Naive thymus-derived CD4-positive, alpha-beta T cell (primary cell): ENCODE measurements at regions of chr9 and their contacts with region 1.

Region 1: DNA sequence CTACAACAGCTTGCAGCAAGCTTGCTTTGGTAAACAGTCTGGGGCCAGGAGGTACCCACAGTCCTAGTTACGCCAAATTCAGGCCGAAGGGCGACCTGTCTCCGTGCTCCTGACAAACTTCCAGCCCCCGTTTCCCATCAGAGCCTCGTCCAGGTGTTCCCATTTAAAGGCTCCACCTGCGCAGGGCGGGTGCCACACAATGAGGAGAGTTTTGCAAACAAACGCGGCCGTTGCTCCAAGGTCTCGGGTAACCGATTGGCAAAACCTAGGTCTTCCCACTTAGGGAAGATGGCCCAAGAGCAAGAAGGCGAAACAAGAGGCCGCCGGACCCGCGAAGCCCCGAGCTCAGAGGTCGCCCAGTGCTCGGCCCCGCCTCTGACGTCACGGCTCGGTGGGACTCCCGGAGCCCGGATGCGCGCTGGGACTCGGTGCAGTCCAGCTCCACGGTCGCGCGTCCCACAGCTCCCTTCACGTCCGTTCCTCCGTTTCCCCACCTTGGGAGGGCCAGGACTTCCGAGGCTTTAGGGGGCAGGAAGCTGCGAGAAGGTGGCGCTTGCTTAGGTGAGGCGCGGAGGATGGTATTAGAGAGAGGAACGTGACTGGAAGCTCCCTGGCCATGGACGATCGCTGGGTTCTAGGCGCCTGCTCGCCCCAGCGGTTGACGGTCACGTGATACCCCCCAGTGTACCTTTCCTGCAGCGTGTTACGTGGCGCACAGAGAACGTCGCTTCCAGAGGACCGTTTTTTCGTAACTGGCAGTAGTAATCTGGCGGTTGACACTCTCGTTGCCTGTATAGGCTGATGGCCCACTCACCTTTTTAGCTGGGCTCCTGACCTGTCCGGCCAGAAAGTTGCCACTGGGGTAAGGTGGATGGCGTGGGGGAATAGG is 41.8 kb upstream of the KDM4C start:
- DNase-seq: peak; percentile 44 to 71 (median 58)
- ATAC-seq: peak; percentile 89
- H3K4me3 ChIP-seq: peak overlapping the region; percentile 77
- H3K4me3 Mint-ChIP-seq: peak overlapping the region; percentile 76 to 92 (median 89)
- H3K27ac ChIP-seq: peak overlapping the region; percentile 66
- H3K27ac Mint-ChIP-seq: peak overlapping the region; percentile 84 to 94 (median 90)
- H3K4me1 ChIP-seq: peaks cover 7% of the 10 kb centered on the region in 2 donors
- H3K4me1 Mint-ChIP-seq: peaks cover 0 to 10% (median 7%) of the 10 kb centered on the region in 7 donors
- H3K27me3 ChIP-seq: no peaks in the 10 kb centered on the region
- H3K27me3 Mint-ChIP-seq: no peaks in the 10 kb centered on the region

Region 2: GRCh38 chr9:6703898-6704639 is 11.9 kb before region 1 on chr9:
- CTCF ChIA-PET with region 1: interaction called, 3 read pairs
- POLR2A ChIA-PET with region 1: interaction called, 16 read pairs
- intact Hi-C with region 1: loop called (anchors 1 kb)
- DNase-seq: peak; percentile 70 to 86 (median 77)
- ATAC-seq: peak; percentile 90
- H3K4me3 ChIP-seq: peak overlapping the region; percentile 98
- H3K4me3 Mint-ChIP-seq: peak overlapping the region; percentile 82 to 98 (median 95)
- H3K27ac ChIP-seq: peak overlapping the region; percentile 97
- H3K27ac Mint-ChIP-seq: peak overlapping the region; percentile 91 to 98 (median 93)
- H3K4me1 ChIP-seq: no peaks in the 10 kb centered on the region
- H3K4me1 Mint-ChIP-seq: peaks cover 3 to 15% (median 6%) of the 10 kb centered on the region in 7 donors
- H3K27me3 ChIP-seq: no peaks in the 10 kb centered on the region
- H3K27me3 Mint-ChIP-seq: peaks cover 0 to 3% (median 0%) of the 10 kb centered on the region in 5 donors

Region 3: DNA sequence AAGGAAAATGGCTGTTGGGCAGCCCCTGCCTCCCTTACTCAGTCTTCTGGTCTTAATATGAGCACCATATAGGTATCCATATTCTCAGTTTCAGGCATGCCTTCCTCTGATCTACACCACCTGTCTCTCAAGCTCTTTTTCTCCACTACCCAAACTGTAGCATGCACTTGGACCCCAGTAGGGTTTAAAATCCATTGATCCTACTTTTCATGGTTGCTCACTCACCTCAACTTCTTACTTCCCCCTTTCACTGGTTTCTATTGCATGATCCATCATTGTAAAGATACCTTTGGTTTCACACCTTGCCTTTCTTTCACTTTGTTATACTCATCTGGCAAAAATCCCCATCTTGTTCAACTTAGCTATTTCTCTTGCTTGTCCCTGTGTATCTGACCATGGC is 201.2 kb after region 1 on chr9:
- CTCF ChIA-PET with region 1: no interaction called
- POLR2A ChIA-PET with region 1: no interaction called
- intact Hi-C with region 1: no loop called
- DNase-seq: no peak
- ATAC-seq: no peak
- H3K4me3 ChIP-seq: no peak overlapping the region
- H3K4me3 Mint-ChIP-seq: no peak overlapping the region
- H3K27ac ChIP-seq: no peak overlapping the region
- H3K27ac Mint-ChIP-seq: no peak overlapping the region
- H3K4me1 ChIP-seq: no peaks in the 10 kb centered on the region
- H3K4me1 Mint-ChIP-seq: peaks cover 29 to 71% (median 56%) of the 10 kb centered on the region in 7 donors
- H3K27me3 ChIP-seq: no peaks in the 10 kb centered on the region
- H3K27me3 Mint-ChIP-seq: no peaks in the 10 kb centered on the region

Region 4: GRCh38 chr9:6944093-6944551 is 228.1 kb after region 1 on chr9:
- CTCF ChIA-PET with region 1: no interaction called
- POLR2A ChIA-PET with region 1: no interaction called
- intact Hi-C with region 1: no loop called
- DNase-seq: peak in 1 of 9 donors; percentile 5
- ATAC-seq: no peak
- H3K4me3 ChIP-seq: no peak overlapping the region
- H3K4me3 Mint-ChIP-seq: no peak overlapping the region
- H3K27ac ChIP-seq: no peak overlapping the region
- H3K27ac Mint-ChIP-seq: no peak overlapping the region
- H3K4me1 ChIP-seq: no peaks in the 10 kb centered on the region
- H3K4me1 Mint-ChIP-seq: peaks cover 21 to 67% (median 50%) of the 10 kb centered on the region in 7 donors
- H3K27me3 ChIP-seq: no peaks in the 10 kb centered on the region
- H3K27me3 Mint-ChIP-seq: no peaks in the 10 kb centered on the region

Region 5: GRCh38 chr9:7033076-7034045 is 317.4 kb after region 1 on chr9:
- CTCF ChIA-PET with region 1: no interaction called
- POLR2A ChIA-PET with region 1: no interaction called
- intact Hi-C with region 1: no loop called
- DNase-seq: no peak
- ATAC-seq: no peak
- H3K4me3 ChIP-seq: no peak overlapping the region
- H3K4me3 Mint-ChIP-seq: no peak overlapping the region
- H3K27ac ChIP-seq: no peak overlapping the region
- H3K27ac Mint-ChIP-seq: peak overlapping the region in 1 of 9 donors; percentile 47
- H3K4me1 ChIP-seq: no peaks in the 10 kb centered on the region
- H3K4me1 Mint-ChIP-seq: peaks cover 0 to 29% (median 2%) of the 10 kb centered on the region in 7 donors
- H3K27me3 ChIP-seq: no peaks in the 10 kb centered on the region
- H3K27me3 Mint-ChIP-seq: no peaks in the 10 kb centered on the region